Posterior cingulate gyrus (tissue), 11 donors: ENCODE measurements at regions of chr3 and their contacts with region 1.

Region 1: GRCh38 chr3:151146071-151146730 is 56.8 kb downstream of the GPR171 start:
- DNase-seq: peak; percentile 41 to 94 (median 72)

Region 2: GRCh38 chr3:150721285-150722130 is 424.7 kb before region 1 on chr3:
- intact Hi-C with region 1: loop called (anchors 1 kb)
- DNase-seq: peak in 1 of 10 donors; percentile 59

Region 3: GRCh38 chr3:150787741-150788370 is 358.3 kb before region 1 on chr3:
- intact Hi-C with region 1: loop called (anchors 2 kb)
- DNase-seq: peak; percentile 74 to 97 (median 88)

Region 4: DNA sequence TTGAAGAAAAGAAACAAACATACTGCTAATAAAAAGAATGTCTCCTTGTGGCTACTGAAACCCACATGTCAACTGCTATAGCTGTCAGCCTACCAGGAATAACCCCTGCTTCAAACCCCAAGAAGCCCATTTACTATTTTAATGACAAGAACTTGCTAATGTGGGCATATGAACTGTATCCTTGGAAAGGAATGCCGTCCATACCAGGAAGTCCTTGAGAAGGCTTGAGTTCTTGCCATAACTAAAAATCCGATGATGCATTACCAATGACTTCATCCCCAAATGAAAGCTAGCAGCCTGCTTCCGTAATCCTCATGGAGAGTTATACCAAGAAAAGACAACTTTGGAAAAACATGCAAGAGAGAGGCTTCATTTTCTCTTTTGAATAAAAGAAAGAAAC is 275.8 kb before region 1 on chr3:
- intact Hi-C with region 1: loop called (anchors 5 kb)
- DNase-seq: no peak

Region 5: GRCh38 chr3:150925751-150926201 is 220.4 kb before region 1 on chr3:
- intact Hi-C with region 1: loop called (anchors 10 kb)
- DNase-seq: peak in 7 of 10 donors; percentile 13 to 86 (median 32)

Region 6: DNA sequence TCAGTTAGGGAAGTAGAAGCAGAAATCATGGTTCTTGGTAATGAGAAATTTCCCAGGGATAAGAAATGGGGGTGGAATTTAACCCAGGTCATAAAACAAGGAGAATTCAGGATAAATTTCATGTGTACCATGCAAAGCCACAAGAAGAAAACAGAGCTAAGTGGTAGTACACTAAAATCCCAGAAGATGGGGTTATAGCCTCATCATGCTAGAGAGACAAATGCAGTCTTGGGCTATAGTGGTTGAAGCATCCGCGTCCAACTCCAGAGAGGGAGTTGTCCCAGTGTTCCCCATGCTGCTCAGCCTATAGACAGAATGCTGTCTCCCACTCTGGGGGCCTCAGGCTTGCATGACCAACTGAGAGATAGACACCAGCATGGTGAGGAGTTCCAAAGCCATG is 137.5 kb before region 1 on chr3:
- intact Hi-C with region 1: loop called (anchors 1 kb)
- DNase-seq: peak in 1 of 10 donors; percentile 57

Region 7: DNA sequence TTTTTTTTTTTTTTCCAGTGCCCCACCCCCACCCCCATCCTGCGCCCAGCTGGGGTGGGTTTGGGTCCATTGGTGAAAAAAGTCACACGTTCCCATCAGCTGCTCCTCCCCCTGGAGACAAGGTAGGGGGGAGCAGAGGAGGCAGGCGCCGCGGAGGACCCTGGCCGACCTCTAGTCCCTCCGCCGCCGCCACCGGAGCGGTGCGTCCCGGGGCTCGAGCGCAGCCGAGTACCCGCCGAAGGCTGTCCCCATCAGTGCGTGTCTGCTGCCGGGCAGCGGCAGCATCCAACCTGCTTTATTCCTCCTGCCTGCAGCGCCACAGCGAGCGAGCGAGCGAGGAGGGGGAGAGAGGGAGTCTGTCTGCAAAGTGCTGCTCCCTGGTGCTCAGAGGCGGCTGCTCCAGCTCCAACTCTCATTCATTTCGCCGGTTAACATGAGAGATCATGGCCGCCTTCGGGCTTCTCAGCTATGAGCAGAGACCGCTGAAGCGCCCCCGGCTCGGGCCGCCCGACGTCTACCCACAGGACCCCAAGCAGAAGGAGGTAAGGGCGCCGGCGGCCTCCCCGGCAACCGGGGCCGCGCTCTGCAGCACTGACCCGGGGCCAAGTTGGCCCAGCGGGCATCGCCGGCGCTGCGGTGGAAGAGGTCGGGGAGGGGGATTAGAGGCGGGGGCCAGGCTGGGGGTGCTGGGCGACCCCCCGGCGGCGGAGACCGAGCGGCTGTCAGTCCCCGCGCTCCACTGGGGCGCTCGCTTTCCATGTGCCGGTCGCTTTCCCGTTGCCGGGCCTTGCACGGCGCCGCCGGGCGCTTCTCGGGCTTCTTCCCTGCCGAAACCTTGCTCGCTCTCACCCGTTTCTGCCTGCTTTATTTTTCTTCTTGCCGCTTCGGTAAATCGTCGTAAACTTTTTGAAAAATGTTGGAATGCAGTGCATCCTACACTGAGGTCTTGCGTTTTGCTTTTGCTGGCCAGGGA is 59.4 kb before region 1 on chr3:
- intact Hi-C with region 1: loop called (anchors 10 kb)
- DNase-seq: peak; percentile 56 to 94 (median 80)

Region 8: DNA sequence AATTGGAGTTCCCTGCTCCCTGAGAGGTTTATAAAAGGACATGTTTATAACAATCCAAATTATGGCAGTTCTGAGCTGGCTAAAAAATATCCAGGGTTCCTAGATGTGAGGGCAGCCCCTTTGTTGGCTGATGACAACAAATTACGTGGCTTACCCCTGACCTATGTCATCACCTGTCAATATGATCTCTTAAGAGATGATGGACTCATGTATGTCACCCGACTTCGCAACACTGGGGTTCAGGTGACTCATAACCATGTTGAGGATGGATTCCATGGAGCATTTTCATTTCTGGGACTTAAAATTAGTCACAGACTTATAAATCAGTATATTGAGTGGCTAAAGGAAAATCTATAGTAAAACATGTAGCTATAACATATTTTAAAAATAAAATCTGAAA is 681.6 kb after region 1 on chr3:
- intact Hi-C with region 1: no loop called
- DNase-seq: no peak